Vagina (tissue), 2 donors: ENCODE measurements at regions of chr19 and their contacts with region 1.

Region 1: GRCh38 chr19:801030-801860 is 4.0 kb downstream of the PTBP1 start:
- DNase-seq: no peak
- H3K4me3 ChIP-seq: peak overlapping the region; percentile 7 to 42
- H3K27ac ChIP-seq: peak overlapping the region; percentile 97
- H3K4me1 ChIP-seq: peaks cover 61% of the 10 kb centered on the region
- H3K27me3 ChIP-seq: no peaks in the 10 kb centered on the region
- CTCF ChIP-seq: no peak
- POLR2A ChIP-seq: no peak

Region 2: GRCh38 chr19:459724-460511 is 341.3 kb before region 1 on chr19:
- intact Hi-C with region 1: no loop called
- DNase-seq: no peak
- H3K4me3 ChIP-seq: peak overlapping the region; percentile 68 to 81
- H3K27ac ChIP-seq: peak overlapping the region; percentile 79
- H3K4me1 ChIP-seq: peaks cover 24% of the 10 kb centered on the region
- H3K27me3 ChIP-seq: no peaks in the 10 kb centered on the region
- CTCF ChIP-seq: no peak
- POLR2A ChIP-seq: peak in 1 of 2 donors; percentile 41

Region 3: GRCh38 chr19:835210-835810 is 34.1 kb after region 1 on chr19:
- intact Hi-C with region 1: no loop called
- DNase-seq: no peak
- H3K4me3 ChIP-seq: no peak overlapping the region
- H3K27ac ChIP-seq: no peak overlapping the region
- H3K4me1 ChIP-seq: no peaks in the 10 kb centered on the region
- H3K27me3 ChIP-seq: no peaks in the 10 kb centered on the region
- CTCF ChIP-seq: no peak
- POLR2A ChIP-seq: no peak

Region 4: DNA sequence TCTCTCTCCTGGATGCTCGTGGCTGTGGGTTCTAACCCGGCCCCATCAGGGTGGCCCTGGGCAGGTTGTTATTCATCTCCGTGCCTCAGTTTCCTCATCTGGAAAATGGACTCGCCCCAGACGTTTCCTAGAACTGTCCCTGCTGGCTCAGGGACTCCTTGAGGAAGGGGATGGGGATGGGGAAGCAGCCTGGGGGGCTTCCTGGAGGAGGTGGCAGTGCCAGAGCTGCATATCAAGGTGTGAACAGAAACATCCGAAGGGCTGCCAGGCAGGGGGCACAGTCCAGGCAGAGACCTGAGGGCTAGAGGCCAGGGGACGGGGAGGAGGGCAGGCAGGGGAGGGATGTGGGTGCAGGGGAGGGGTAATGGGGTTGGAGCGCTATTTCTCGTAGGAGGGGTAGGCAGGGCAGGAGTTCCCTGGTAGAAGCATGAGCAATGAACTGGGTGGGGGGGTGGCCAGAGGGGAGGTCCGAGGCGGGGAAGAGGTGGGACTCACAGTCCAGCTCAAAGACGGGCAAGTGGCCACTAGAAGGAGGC is 47.2 kb after region 1 on chr19:
- intact Hi-C with region 1: loop called (anchors 5 kb)
- DNase-seq: no peak
- H3K4me3 ChIP-seq: no peak overlapping the region
- H3K27ac ChIP-seq: peak overlapping the region; percentile 43
- H3K4me1 ChIP-seq: peaks cover 50% of the 10 kb centered on the region
- H3K27me3 ChIP-seq: peaks cover 9% of the 10 kb centered on the region
- CTCF ChIP-seq: no peak
- POLR2A ChIP-seq: no peak